A673 (cell line): ENCODE measurements at regions of chr12 and their contacts with region 1.

Region 1: GRCh38 chr12:111419784-111420183 is 14.1 kb downstream of the SH2B3 start:
- DNase-seq: no peak
- H3K4me3 ChIP-seq: no peak overlapping the region
- H3K27ac ChIP-seq: no peak overlapping the region
- H3K4me1 ChIP-seq: no peaks in the 10 kb centered on the region
- H3K27me3 ChIP-seq: no peaks in the 10 kb centered on the region
- CTCF ChIP-seq: no peak

Region 2: GRCh38 chr12:111442301-111443045 is 22.7 kb after region 1 on chr12:
- CTCF ChIA-PET with region 1: no interaction called
- POLR2A ChIA-PET with region 1: interaction called, 14 read pairs
- intact Hi-C with region 1: no loop called
- DNase-seq: no peak
- H3K4me3 ChIP-seq: no peak overlapping the region
- H3K27ac ChIP-seq: peak overlapping the region; percentile 87
- H3K4me1 ChIP-seq: peaks cover 58% of the 10 kb centered on the region
- H3K27me3 ChIP-seq: no peaks in the 10 kb centered on the region
- CTCF ChIP-seq: no peak